ENCODE measurements at regions of chr1 and their contacts with region 1.

Region 1: DNA sequence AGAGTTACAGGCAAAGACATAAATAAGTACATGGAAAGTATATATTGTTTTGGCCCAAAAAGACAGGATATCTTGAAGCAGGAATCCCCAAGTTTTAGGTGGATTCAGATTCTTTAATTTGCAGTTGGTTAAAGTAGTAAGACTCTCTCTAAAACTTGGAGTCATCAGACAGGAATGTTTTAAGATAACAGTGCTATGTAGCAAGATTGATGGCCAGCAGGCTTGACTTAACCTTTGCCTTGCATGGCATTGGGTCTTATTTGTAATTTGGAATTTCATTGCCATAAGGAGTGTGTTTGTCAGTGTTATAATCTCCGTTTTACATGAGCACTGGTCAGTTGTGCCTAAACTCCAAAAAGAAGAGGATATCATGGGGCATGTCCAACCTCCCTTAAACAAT is 727.6 kb upstream of the CHRM3 start:
- DNase-seq: no peak
- H3K4me3 Mint-ChIP-seq: no peak overlapping the region
- H3K27ac Mint-ChIP-seq: no peak overlapping the region
- H3K4me1 Mint-ChIP-seq: no peaks in the 10 kb centered on the region
- H3K27me3 Mint-ChIP-seq: no peaks in the 10 kb centered on the region

Region 2: DNA sequence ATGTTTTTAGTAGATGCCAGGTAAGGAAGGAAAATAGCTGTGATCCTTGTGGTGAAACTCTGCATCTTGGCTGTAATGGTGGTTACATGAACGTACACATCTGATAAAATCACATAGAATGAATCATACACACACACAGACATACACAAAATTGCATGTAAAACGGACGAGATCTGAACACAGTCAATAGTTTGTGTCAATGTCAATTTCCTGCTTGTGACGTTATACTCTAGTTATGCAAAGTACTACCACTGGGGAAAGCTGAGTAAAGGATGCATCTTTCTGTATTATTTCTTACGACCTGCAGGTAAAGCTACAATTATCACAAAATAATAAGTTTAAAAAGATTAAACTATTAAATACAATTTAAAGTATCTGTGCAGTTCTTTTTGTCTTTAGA is 274.4 kb before region 1 on chr1:
- intact Hi-C with region 1: no loop called
- DNase-seq: no peak
- H3K4me3 Mint-ChIP-seq: no peak overlapping the region
- H3K27ac Mint-ChIP-seq: no peak overlapping the region
- H3K4me1 Mint-ChIP-seq: no peaks in the 10 kb centered on the region
- H3K27me3 Mint-ChIP-seq: no peaks in the 10 kb centered on the region

Region 3: DNA sequence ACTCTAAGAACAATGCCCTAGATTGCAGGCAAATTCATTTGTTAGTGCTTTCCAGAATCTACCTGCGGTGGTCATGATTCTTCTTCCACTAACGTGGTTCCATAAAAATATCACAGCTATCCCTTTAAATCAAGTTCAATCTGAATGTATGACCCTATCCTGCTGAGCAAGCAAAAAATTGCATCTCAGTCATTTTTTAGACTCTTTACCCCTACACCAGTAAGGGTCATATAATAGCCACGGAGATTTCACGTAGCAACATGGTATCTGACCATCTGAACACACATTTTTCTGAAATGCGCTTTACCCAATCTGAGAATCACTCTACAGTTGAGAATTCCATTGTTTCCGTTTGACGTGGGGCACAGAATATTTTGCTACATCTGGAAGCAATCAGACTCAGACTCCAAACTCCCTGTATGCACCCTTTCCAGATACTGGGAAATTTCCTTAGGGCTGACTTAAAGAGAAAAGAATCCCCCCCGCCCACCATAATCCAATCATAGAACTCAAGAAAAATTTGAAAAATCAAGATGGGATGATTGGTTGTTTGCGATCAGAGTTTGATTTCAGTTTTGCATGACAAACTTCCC is 68.8 kb before region 1 on chr1:
- intact Hi-C with region 1: no loop called
- DNase-seq: no peak
- H3K4me3 Mint-ChIP-seq: no peak overlapping the region
- H3K27ac Mint-ChIP-seq: no peak overlapping the region
- H3K4me1 Mint-ChIP-seq: no peaks in the 10 kb centered on the region
- H3K27me3 Mint-ChIP-seq: no peaks in the 10 kb centered on the region

Region 4: DNA sequence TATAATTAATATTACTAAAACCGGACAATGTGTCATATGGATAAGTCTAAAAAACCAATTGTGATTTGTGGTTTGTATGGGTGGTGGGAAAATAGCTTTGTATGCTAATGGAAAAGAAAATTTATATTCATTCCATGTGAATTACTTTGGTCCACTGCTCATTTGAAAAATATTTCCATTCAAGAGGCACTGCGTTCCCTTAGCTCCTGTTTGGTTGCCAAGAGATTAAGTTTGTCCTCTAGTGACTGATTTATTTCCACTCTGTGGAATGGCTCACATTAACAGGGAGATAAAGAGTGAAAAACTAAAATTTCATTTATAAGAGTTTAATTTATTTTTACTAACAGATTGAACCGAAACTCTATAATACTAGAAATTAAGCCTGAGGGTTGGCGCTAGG is 16.5 kb before region 1 on chr1:
- intact Hi-C with region 1: loop called (anchors 2 kb)
- DNase-seq: no peak
- H3K4me3 Mint-ChIP-seq: no peak overlapping the region
- H3K27ac Mint-ChIP-seq: no peak overlapping the region
- H3K4me1 Mint-ChIP-seq: no peaks in the 10 kb centered on the region
- H3K27me3 Mint-ChIP-seq: no peaks in the 10 kb centered on the region

Region 5: DNA sequence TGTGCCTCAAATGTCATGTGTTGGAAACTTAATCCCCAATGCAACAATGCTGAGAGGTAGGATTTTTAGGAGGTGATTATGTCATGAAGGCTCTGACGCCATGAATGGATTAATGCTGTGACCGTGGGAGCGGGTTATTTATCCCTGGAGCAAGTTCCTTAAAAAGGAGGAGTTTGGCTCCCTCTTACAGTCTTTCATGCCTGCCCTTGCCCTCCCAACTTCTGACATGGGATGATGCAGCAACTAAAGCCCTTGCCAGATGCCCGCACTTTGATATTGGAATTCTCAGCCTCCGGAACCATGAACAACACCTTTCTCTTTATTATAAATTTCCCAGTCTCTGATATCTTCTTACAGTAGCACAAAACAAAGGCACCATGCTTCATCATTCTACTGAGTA is 42.3 kb after region 1 on chr1:
- intact Hi-C with region 1: no loop called
- DNase-seq: no peak
- H3K4me3 Mint-ChIP-seq: no peak overlapping the region
- H3K27ac Mint-ChIP-seq: no peak overlapping the region
- H3K4me1 Mint-ChIP-seq: no peaks in the 10 kb centered on the region
- H3K27me3 Mint-ChIP-seq: no peaks in the 10 kb centered on the region

Measured in activated T-helper 1 cell treated with anti-CD3 and anti-CD28 coated beads, Interleukin-12 subunit alpha, Interleukin-12 subunit beta, Interleukin-2, Interleukin-4 antibody, amounts not matched to agents 30 ng/mL and 10 ng/mL and 1 ng/mL, durations not matched to agents 14 hours and 24 hours and 36 hours (primary cell).